Activated CD8-positive, alpha-beta T cell treated with anti-CD3 and anti-CD28 coated beads for 36 hours (primary cell): ENCODE measurements at regions of chr5 and their contacts with region 1.

Region 1: GRCh38 chr5:34522599-34523386 is 133.3 kb upstream of the RAI14 start:
- DNase-seq: peak; percentile 70
- ATAC-seq: peak; percentile 71
- H3K4me3 Mint-ChIP-seq: no peak overlapping the region
- H3K27ac Mint-ChIP-seq: no peak overlapping the region
- H3K4me1 Mint-ChIP-seq: peaks cover 2% of the 10 kb centered on the region
- H3K27me3 Mint-ChIP-seq: peaks cover 7% of the 10 kb centered on the region
- CTCF ChIP-seq: peak; percentile 76

Region 2: DNA sequence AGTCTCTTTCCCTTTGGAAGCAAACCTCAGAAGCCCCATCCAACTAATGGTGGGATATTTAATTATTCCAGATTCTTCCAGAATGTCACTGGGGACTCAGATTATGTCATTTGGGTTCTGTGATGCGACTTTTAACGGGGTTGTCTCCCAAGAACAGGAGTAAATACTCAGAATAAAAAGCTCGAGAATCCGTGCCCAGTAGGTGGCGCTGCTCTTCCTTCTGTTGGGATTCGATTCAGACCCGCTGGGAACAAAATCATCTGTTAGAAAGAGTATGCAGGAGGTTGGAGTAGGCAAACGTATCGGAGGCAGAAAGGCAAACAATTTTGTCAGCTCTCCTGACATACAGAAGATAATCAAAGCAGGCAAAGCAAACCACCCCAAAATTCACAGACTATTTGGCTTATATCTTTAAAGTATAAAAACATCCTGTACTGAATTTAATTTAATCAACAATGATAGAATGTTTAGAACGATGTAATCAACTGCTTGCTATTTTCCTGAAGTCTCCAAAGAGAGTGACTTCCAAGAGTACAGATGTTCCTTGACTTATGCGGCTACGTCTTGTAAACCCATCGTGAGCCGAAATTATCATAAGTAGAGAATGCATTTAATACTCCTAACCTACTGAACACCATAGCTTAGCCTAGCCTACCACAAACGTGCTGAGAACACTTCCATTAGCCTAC is 36.5 kb before region 1 on chr5:
- CTCF ChIA-PET with region 1: interaction called, 17 read pairs
- POLR2A ChIA-PET with region 1: no interaction called
- intact Hi-C with region 1: no loop called
- DNase-seq: peak; percentile 85
- ATAC-seq: peak; percentile 58
- H3K4me3 Mint-ChIP-seq: no peak overlapping the region
- H3K27ac Mint-ChIP-seq: no peak overlapping the region
- H3K4me1 Mint-ChIP-seq: peaks cover 2% of the 10 kb centered on the region
- H3K27me3 Mint-ChIP-seq: peaks cover 16% of the 10 kb centered on the region
- CTCF ChIP-seq: peak; percentile 83

Region 3: DNA sequence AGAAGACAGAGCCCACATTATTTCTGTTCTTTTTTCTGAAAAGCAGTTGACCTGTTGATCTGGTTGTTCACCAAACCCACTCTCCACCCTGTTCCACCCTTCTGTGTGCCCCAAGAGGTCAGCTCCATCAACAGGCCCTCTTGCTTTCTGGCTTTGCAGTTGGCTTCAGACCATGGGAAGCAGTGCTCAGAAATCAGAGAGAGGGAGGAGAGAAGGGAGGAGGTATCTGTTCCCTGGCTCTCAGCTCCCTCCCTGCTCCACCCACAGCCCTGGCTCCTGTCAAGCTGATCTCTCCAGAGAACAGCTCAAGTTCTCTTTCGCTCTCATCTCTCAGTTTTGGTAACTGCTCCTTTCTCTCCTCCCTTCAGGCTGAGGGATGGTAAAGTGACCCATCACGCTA is 10.9 kb before region 1 on chr5:
- CTCF ChIA-PET with region 1: interaction called, 17 read pairs
- POLR2A ChIA-PET with region 1: no interaction called
- intact Hi-C with region 1: no loop called
- DNase-seq: no peak
- ATAC-seq: no peak
- H3K4me3 Mint-ChIP-seq: no peak overlapping the region
- H3K27ac Mint-ChIP-seq: no peak overlapping the region
- H3K4me1 Mint-ChIP-seq: no peaks in the 10 kb centered on the region
- H3K27me3 Mint-ChIP-seq: peaks cover 20% of the 10 kb centered on the region
- CTCF ChIP-seq: no peak

Region 4: GRCh38 chr5:34533582-34534522 is 11.1 kb after region 1 on chr5:
- CTCF ChIA-PET with region 1: interaction called, 10 read pairs
- POLR2A ChIA-PET with region 1: interaction called, 3 read pairs
- intact Hi-C with region 1: no loop called
- DNase-seq: peak; percentile 7
- ATAC-seq: peak; percentile 41
- H3K4me3 Mint-ChIP-seq: no peak overlapping the region
- H3K27ac Mint-ChIP-seq: no peak overlapping the region
- H3K4me1 Mint-ChIP-seq: peaks cover 18% of the 10 kb centered on the region
- H3K27me3 Mint-ChIP-seq: peaks cover 5% of the 10 kb centered on the region
- CTCF ChIP-seq: no peak

Region 5: GRCh38 chr5:34542818-34543217 is 20.0 kb after region 1 on chr5:
- CTCF ChIA-PET with region 1: interaction called, 10 read pairs
- POLR2A ChIA-PET with region 1: no interaction called
- intact Hi-C with region 1: no loop called
- DNase-seq: no peak
- ATAC-seq: no peak
- H3K4me3 Mint-ChIP-seq: no peak overlapping the region
- H3K27ac Mint-ChIP-seq: no peak overlapping the region
- H3K4me1 Mint-ChIP-seq: peaks cover 2% of the 10 kb centered on the region
- H3K27me3 Mint-ChIP-seq: peaks cover 26% of the 10 kb centered on the region
- CTCF ChIP-seq: no peak

Region 6: DNA sequence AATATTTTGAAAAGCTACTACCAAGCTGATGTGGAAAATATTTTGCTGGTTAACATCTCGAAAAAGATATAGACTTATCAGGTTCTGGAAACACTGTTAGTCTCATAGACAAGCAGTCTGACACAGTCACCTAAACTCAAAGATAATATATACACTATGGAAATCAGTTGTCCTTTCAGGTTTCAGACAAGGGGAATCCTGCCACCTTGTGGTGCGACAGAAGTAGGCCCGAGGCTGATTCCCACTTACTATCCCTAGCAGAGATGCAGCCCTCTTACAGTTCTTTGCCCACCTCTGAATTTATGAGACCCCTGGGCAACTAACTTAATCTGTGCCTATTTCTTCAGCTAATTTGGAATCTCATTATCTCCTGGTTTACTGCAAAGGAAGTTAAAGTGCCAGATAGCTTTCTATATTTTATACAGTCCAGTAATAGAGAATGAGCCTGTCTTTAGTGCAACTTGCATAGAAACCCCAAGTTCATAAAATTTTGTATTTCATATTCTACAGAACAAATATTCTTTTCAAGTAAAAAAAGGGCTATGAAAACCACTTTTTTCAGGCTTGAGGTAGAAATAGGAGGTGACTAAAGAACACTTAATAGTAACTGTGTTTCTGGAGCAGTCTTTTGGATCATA is 375.6 kb after region 1 on chr5:
- CTCF ChIA-PET with region 1: interaction called, 47 read pairs
- POLR2A ChIA-PET with region 1: interaction called, 3 read pairs
- intact Hi-C with region 1: loop called (anchors 1 kb)
- DNase-seq: peak; percentile 69
- ATAC-seq: peak; percentile 77
- H3K4me3 Mint-ChIP-seq: no peak overlapping the region
- H3K27ac Mint-ChIP-seq: no peak overlapping the region
- H3K4me1 Mint-ChIP-seq: no peaks in the 10 kb centered on the region
- H3K27me3 Mint-ChIP-seq: no peaks in the 10 kb centered on the region
- CTCF ChIP-seq: peak; percentile 80

Region 7: DNA sequence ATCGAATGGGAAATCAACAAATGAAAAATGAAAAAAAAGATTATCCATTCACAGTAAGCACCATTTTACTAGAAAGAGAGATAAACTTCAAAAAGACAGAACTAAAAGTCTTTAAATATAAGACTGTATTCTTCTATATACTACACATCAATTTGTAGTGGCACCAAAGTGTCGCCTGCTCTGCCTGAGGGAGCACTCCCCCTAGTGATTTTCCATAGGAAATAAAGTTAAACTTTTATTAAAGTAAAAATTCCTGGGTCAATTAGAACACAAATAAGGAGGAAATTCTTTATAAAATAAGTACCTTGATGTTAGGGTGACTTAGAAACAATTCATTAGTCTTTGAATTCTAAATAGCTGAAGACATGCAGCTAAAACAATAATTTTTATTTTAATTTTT is 382.8 kb after region 1 on chr5:
- CTCF ChIA-PET with region 1: interaction called, 47 read pairs
- POLR2A ChIA-PET with region 1: interaction called, 3 read pairs
- intact Hi-C with region 1: no loop called
- DNase-seq: no peak
- ATAC-seq: no peak
- H3K4me3 Mint-ChIP-seq: no peak overlapping the region
- H3K27ac Mint-ChIP-seq: no peak overlapping the region
- H3K4me1 Mint-ChIP-seq: peaks cover 4% of the 10 kb centered on the region
- H3K27me3 Mint-ChIP-seq: no peaks in the 10 kb centered on the region
- CTCF ChIP-seq: no peak